Activated B cell treated with CpG ODN at 0.5 μM for 24 hours (primary cell): ENCODE measurements at regions of chr7 and their contacts with region 1.

Region 1: GRCh38 chr7:50166997-50167965 is 74.2 kb upstream of the ZPBP start:
- DNase-seq: no peak
- ATAC-seq: peak; percentile 91
- H3K4me3 Mint-ChIP-seq: peak overlapping the region; percentile 20
- H3K27ac Mint-ChIP-seq: peak overlapping the region; percentile 69
- H3K4me1 Mint-ChIP-seq: peaks cover 52% of the 10 kb centered on the region
- H3K27me3 Mint-ChIP-seq: no peaks in the 10 kb centered on the region
- CTCF ChIP-seq: no peak

Region 2: DNA sequence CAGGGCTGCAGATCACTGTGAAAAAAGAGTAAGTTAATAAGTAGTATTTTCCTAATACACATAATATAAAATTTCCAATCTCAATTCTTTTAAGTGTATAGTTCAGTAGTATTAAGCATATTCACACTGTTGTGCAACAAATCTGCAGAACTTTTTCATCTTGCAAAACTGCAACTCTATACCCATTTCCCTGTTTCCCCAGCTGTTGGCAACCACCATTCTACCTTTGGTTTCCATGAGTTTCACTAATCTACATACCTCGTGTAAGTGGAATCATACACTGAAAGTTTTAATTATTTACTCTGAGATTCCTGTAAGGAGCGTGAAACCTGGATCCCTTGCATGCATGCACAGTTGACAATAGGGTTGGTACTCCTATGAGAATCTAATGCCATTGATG is 229.7 kb before region 1 on chr7:
- CTCF ChIA-PET with region 1: no interaction called
- POLR2A ChIA-PET with region 1: no interaction called
- intact Hi-C with region 1: no loop called
- DNase-seq: no peak
- ATAC-seq: no peak
- H3K4me3 Mint-ChIP-seq: no peak overlapping the region
- H3K27ac Mint-ChIP-seq: no peak overlapping the region
- H3K4me1 Mint-ChIP-seq: no peaks in the 10 kb centered on the region
- H3K27me3 Mint-ChIP-seq: no peaks in the 10 kb centered on the region
- CTCF ChIP-seq: no peak

Region 3: DNA sequence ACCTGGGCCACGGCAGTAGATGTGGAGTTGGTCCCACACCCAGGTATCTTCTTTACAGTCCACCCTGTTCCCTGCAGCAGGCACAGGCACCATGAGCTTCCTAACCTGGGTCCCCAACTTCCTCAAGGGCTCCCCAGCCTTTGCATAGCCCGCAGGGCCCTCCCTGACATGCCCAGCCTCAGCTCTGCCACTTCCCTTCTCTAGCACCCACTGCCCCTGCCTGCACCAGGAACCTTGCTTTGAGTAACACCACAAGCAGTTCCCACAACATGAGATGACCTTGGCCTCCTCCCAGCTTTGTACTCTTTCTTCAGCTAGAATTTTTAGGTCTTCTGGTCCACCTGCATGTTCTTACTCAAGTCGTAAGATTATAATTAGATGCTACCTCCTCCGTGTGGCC is 17.9 kb after region 1 on chr7:
- CTCF ChIA-PET with region 1: no interaction called
- POLR2A ChIA-PET with region 1: interaction called, 3 read pairs
- intact Hi-C with region 1: loop called (anchors 2 kb)
- DNase-seq: no peak
- ATAC-seq: no peak
- H3K4me3 Mint-ChIP-seq: no peak overlapping the region
- H3K27ac Mint-ChIP-seq: no peak overlapping the region
- H3K4me1 Mint-ChIP-seq: peaks cover 16% of the 10 kb centered on the region
- H3K27me3 Mint-ChIP-seq: no peaks in the 10 kb centered on the region
- CTCF ChIP-seq: no peak